ENCODE measurements at regions of chr10 and their contacts with region 1.

Region 1: DNA sequence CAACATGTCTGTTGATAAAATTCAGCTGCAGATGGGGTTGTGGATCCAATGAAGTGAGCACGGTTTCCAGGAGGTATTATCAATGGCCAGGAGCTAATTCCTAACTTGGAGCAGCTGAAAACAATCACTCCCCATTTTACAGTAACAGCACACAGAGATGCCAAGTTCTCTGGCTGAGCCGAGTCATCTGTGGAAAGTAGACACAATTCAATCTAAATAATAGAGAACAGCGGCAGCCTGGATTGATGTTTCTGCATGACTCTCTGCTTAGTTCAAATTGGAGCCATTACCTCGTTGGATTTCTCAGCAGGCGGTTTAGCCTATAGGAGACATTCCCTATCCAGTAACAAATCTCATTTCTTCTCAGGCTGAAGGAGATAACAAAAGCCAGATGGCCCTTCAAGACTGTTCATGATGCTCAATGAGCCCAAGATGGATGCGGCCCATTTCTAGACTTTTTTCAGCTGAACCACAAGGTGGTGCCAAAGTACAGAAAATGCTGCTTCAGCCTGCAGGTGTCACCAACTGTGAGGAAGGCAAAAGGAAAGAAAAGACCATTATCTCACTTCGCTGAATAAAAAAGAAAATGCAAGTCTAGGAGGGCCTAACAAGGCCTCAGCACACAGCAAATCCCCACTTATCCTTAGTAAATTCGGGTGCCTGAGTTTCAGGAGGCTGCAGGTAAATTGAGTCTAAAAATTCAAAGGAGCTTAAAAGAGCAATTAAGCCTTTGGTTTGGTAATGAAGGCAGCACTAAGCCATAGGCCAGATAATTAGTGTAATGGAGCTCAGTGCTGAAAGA is 83.7 kb downstream of the SLC16A9 start:
- DNase-seq: peak; percentile 71
- ATAC-seq: peak; percentile 91
- H3K4me3 ChIP-seq: no peak overlapping the region
- H3K27ac ChIP-seq: no peak overlapping the region
- H3K4me1 ChIP-seq: no peaks in the 10 kb centered on the region
- H3K27me3 ChIP-seq: peaks cover 8% of the 10 kb centered on the region
- CTCF ChIP-seq: peak; percentile 91
- POLR2A ChIP-seq: no peak
- RAD21 ChIP-seq: peak; percentile 95

Region 2: GRCh38 chr10:58781873-58782488 is 843.9 kb before region 1 on chr10:
- CTCF ChIA-PET with region 1: no interaction called
- POLR2A ChIA-PET with region 1: no interaction called
- dilution Hi-C with region 1: no loop called
- in situ Hi-C with region 1: no loop called
- intact Hi-C with region 1: loop called (anchors 5 kb)
- DNase-seq: peak; percentile 49
- ATAC-seq: peak; percentile 48; the same call in 1 of the 2 replicates
- H3K4me3 ChIP-seq: no peak overlapping the region
- H3K27ac ChIP-seq: no peak overlapping the region
- H3K4me1 ChIP-seq: peaks cover 8% of the 10 kb centered on the region
- H3K27me3 ChIP-seq: no peaks in the 10 kb centered on the region
- CTCF ChIP-seq: peak; percentile 65
- POLR2A ChIP-seq: no peak
- RAD21 ChIP-seq: peak; percentile 73

Region 3: GRCh38 chr10:59240582-59241183 is 385.2 kb before region 1 on chr10:
- CTCF ChIA-PET with region 1: no interaction called
- POLR2A ChIA-PET with region 1: no interaction called
- dilution Hi-C with region 1: no loop called
- in situ Hi-C with region 1: loop called (anchors 10 kb)
- intact Hi-C with region 1: loop called (anchors 1 kb)
- DNase-seq: peak; percentile 55
- ATAC-seq: no peak
- H3K4me3 ChIP-seq: no peak overlapping the region
- H3K27ac ChIP-seq: no peak overlapping the region
- H3K4me1 ChIP-seq: no peaks in the 10 kb centered on the region
- H3K27me3 ChIP-seq: no peaks in the 10 kb centered on the region
- CTCF ChIP-seq: peak; percentile 75
- POLR2A ChIP-seq: no peak
- RAD21 ChIP-seq: peak; percentile 75

Region 4: DNA sequence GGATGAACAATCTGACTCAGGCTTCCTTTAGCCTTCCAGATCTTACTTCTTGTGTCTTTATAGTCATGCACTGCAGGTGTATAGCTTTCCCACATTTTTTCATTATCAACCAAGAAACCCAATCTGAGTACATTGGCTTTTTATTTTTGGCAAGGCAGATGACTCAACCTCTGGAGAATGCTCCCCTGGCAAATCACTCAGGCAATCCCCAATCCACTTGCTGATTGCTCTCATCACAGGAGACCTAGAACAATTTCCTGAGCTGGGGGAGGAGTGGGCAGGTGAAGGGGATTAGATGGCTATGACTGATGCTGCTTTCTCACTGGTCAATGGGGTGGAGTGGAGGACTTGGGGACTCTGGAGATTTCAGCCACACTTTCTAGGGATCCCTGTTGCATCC is 50.7 kb before region 1 on chr10:
- CTCF ChIA-PET with region 1: no interaction called
- POLR2A ChIA-PET with region 1: no interaction called
- dilution Hi-C with region 1: no loop called
- in situ Hi-C with region 1: no loop called
- intact Hi-C with region 1: no loop called
- DNase-seq: no peak
- ATAC-seq: no peak
- H3K4me3 ChIP-seq: no peak overlapping the region
- H3K27ac ChIP-seq: no peak overlapping the region
- H3K4me1 ChIP-seq: peaks cover 3% of the 10 kb centered on the region; the same call in 1 of the 2 replicates
- H3K27me3 ChIP-seq: peaks cover 2% of the 10 kb centered on the region
- CTCF ChIP-seq: no peak
- POLR2A ChIP-seq: no peak
- RAD21 ChIP-seq: no peak

Region 5: GRCh38 chr10:59830601-59831259 is 204.8 kb after region 1 on chr10:
- CTCF ChIA-PET with region 1: interaction called, 6 read pairs
- POLR2A ChIA-PET with region 1: no interaction called
- dilution Hi-C with region 1: no loop called
- in situ Hi-C with region 1: loop called (anchors 10 kb)
- intact Hi-C with region 1: loop called (anchors 1 kb)
- DNase-seq: peak; percentile 56
- ATAC-seq: peak; percentile 82
- H3K4me3 ChIP-seq: no peak overlapping the region
- H3K27ac ChIP-seq: no peak overlapping the region
- H3K4me1 ChIP-seq: no peaks in the 10 kb centered on the region
- H3K27me3 ChIP-seq: no peaks in the 10 kb centered on the region
- CTCF ChIP-seq: peak; percentile 70
- POLR2A ChIP-seq: no peak
- RAD21 ChIP-seq: peak; percentile 60

Region 6: DNA sequence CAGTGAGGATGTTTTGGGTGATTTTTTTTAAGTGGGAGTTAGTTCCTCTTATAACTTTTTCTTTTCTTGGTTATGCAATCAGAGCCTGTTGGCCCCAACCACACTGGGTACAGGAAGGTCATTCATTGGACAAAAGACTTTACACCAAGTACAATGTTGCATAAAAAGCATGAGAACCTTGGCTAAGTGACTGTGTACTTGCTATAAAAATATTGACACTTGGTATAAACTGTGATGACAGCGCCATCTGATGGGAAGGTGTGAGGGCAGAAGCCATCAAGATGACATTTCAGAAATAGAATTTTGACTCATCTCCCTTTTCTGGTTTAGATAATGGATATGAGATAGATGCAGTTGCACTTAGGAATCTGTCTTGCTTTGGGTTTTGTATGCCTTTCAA is 406.8 kb after region 1 on chr10:
- CTCF ChIA-PET with region 1: no interaction called
- POLR2A ChIA-PET with region 1: no interaction called
- dilution Hi-C with region 1: no loop called
- in situ Hi-C with region 1: loop called (anchors 25 kb)
- intact Hi-C with region 1: loop called (anchors 1 kb)
- DNase-seq: peak; percentile 36
- ATAC-seq: peak; percentile 35; the same call in 1 of the 2 replicates
- H3K4me3 ChIP-seq: no peak overlapping the region
- H3K27ac ChIP-seq: no peak overlapping the region
- H3K4me1 ChIP-seq: no peaks in the 10 kb centered on the region
- H3K27me3 ChIP-seq: no peaks in the 10 kb centered on the region
- CTCF ChIP-seq: peak; percentile 54
- POLR2A ChIP-seq: no peak
- RAD21 ChIP-seq: peak; percentile 64

Region 7: DNA sequence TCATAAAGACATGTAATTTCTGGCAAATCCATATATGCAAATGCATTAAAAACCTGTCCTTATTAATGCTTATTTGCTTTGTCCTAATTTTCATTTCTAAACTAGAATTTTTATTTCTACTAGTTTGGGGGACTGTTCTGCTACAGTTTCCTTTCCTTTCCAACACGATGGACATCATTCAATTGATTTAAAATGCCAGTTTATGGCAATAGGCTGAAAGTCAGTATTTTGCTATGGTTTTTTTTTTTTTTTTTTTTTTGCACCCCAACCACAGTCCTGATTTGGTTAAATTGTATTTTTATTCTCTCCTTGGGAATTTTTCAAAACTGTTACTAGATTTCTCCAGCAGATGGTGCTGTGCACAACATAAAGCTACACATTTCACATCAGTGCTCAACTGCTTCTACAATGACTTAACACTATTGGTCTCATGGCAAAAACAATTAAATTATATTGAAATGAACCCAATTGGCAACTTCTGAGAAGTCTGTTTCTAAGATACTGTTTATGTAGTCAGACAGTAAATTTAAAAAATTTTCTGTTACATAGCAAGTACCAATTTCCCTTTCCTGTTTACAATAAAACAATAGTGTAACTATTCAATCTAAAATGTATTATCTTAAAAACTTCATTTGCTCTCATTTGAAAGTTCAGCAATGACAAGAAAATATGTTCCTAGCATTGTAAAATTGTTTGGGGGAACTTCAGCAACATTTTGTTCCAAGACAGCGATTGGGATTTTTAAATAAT is 474.3 kb after region 1 on chr10:
- CTCF ChIA-PET with region 1: no interaction called
- POLR2A ChIA-PET with region 1: no interaction called
- dilution Hi-C with region 1: no loop called
- in situ Hi-C with region 1: no loop called
- intact Hi-C with region 1: loop called (anchors 2 kb)
- DNase-seq: peak; percentile 63
- ATAC-seq: peak; percentile 63
- H3K4me3 ChIP-seq: no peak overlapping the region
- H3K27ac ChIP-seq: no peak overlapping the region
- H3K4me1 ChIP-seq: peaks cover 1% of the 10 kb centered on the region; the same call in 1 of the 2 replicates
- H3K27me3 ChIP-seq: peaks cover 1% of the 10 kb centered on the region; the same call in 1 of the 2 replicates
- CTCF ChIP-seq: peak; percentile 69
- POLR2A ChIP-seq: no peak
- RAD21 ChIP-seq: peak; percentile 73

Region 8: GRCh38 chr10:60208676-60209269 is 582.9 kb after region 1 on chr10:
- CTCF ChIA-PET with region 1: interaction called, 3 read pairs
- POLR2A ChIA-PET with region 1: no interaction called
- dilution Hi-C with region 1: no loop called
- in situ Hi-C with region 1: loop called (anchors 25 kb)
- intact Hi-C with region 1: loop called (anchors 1 kb)
- DNase-seq: peak; percentile 49
- ATAC-seq: peak; percentile 59
- H3K4me3 ChIP-seq: no peak overlapping the region
- H3K27ac ChIP-seq: no peak overlapping the region
- H3K4me1 ChIP-seq: no peaks in the 10 kb centered on the region
- H3K27me3 ChIP-seq: peaks cover 15% of the 10 kb centered on the region
- CTCF ChIP-seq: peak; percentile 83
- POLR2A ChIP-seq: no peak
- RAD21 ChIP-seq: peak; percentile 80

Measured in IMR-90 (cell line).